Activated CD4-positive, alpha-beta memory T cell treated with anti-CD3 and anti-CD28 coated beads for 36 hours (primary cell): ENCODE measurements at regions of chr15 and their contacts with region 1.

Region 1: DNA sequence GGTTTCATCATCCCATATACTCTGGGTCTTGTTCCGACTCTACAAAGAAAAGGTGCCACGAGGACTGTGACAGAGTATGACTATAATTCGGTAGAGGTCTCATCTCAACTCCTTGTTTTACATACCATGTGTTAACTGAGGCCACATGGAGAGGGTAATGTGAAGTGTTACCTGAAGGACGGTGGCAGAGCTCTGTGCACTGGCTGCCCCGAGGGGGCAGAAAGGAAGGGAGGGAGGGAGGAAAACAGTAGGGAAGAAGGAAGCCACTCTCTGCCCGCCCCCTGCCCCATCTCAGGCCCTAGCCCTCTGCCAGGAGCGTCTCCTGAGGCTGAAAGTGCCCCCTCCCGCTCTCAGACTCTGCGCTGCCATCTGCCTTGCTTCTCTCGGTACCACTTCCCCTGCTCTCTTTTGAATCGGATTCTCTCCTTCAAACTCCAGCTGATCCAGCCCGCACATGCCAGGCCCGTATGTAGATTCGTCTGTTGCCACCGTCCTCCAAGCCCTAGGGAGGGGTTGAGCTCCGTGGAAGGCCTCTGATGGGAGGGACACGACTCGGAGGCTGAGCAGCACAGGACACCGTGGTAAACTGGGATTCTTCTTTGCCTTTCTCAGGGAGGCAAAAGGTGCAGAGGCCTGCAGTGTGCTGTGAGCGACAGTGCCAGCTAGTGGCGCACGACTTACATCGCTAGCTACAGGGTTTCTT is 70.5 kb upstream of the ATP10A start:
- DNase-seq: peak; percentile 83
- H3K4me3 Mint-ChIP-seq: peak overlapping the region; percentile 81
- H3K27ac Mint-ChIP-seq: no peak overlapping the region
- H3K4me1 Mint-ChIP-seq: peaks cover 7% of the 10 kb centered on the region
- H3K27me3 Mint-ChIP-seq: peaks cover 5% of the 10 kb centered on the region

Region 2: GRCh38 chr15:25508369-25509002 is 425.1 kb before region 1 on chr15:
- CTCF ChIA-PET with region 1: interaction called, 30 read pairs
- POLR2A ChIA-PET with region 1: no interaction called
- intact Hi-C with region 1: loop called (anchors 1 kb)
- DNase-seq: no peak
- H3K4me3 Mint-ChIP-seq: no peak overlapping the region
- H3K27ac Mint-ChIP-seq: no peak overlapping the region
- H3K4me1 Mint-ChIP-seq: no peaks in the 10 kb centered on the region
- H3K27me3 Mint-ChIP-seq: peaks cover 5% of the 10 kb centered on the region

Region 3: DNA sequence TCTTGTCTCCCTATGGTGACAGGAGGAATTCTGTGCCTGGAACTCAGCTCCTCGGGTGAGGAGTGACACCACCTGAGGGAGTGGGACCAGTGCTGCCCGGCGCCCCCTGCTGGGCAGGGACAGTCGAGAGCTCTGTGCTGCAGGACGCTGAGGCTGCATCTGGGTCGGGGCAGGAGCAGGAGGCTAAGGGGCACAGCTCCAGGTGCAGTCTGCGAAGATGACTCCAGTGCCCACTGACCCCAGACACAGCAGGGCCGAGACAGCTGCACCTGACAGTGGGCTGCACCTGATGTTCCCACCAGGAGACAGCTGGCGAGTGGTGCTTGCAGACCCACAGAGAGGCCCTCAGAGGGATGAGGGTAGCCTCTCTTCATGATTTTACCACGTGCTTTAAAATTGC is 223.4 kb before region 1 on chr15:
- CTCF ChIA-PET with region 1: interaction called, 12 read pairs
- POLR2A ChIA-PET with region 1: no interaction called
- intact Hi-C with region 1: no loop called
- DNase-seq: peak; percentile 61
- H3K4me3 Mint-ChIP-seq: no peak overlapping the region
- H3K27ac Mint-ChIP-seq: no peak overlapping the region
- H3K4me1 Mint-ChIP-seq: no peaks in the 10 kb centered on the region
- H3K27me3 Mint-ChIP-seq: no peaks in the 10 kb centered on the region

Region 4: GRCh38 chr15:25783607-25784540 is 149.7 kb before region 1 on chr15:
- CTCF ChIA-PET with region 1: interaction called, 27 read pairs
- POLR2A ChIA-PET with region 1: no interaction called
- intact Hi-C with region 1: no loop called
- DNase-seq: peak; percentile 62
- H3K4me3 Mint-ChIP-seq: no peak overlapping the region
- H3K27ac Mint-ChIP-seq: no peak overlapping the region
- H3K4me1 Mint-ChIP-seq: peaks cover 33% of the 10 kb centered on the region
- H3K27me3 Mint-ChIP-seq: no peaks in the 10 kb centered on the region

Region 5: DNA sequence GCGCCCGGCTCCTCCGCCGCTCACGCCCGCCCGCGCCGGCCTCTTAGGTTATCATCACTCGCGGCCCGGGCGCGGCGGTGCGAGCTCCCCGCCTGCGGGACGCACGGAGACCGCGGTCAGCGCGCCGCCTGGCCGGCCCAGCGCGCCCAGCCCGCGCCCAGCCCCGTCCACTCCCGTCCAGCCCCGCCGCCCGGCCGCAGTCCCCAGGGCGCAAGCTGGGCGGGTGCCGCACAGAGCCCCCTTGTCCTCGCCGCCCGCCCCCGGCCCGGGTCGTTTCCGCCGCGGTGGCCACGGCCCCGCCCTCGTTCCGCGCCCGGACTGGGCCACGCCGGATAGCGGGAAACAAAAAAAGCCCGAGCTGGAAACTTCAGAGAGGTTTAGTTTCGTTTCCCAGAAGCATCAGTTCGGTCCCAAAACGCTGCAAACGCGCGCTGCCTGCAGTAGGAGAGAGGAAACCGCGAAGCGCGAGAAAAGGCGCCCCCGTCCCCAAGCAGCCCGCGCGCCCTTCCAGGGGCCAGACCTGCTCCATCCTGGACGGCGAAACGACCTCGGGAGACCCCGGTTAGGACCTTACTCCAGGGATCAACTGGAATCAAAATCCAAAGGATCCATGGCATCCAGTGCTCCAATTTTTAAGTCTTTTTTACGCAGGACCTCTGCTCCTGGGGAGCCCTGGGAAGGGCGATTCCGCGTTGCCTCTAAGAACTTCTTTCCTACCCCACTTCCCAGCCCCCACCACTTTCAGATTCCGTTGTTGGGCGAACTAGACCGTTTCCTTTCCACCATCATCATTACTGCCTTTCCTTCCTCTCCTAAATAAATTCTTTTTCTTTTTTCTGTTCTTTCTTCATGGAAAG is 70.3 kb before region 1 on chr15 and contains the start of gene ATP10A:
- CTCF ChIA-PET with region 1: interaction called, 5 read pairs
- POLR2A ChIA-PET with region 1: no interaction called
- intact Hi-C with region 1: loop called (anchors 10 kb)
- DNase-seq: peak; percentile 66
- H3K4me3 Mint-ChIP-seq: peak within 1 kb of the TSS; percentile 90
- H3K27ac Mint-ChIP-seq: peak within 1 kb of the TSS; percentile 86
- H3K4me1 Mint-ChIP-seq: peaks cover 34% of the 10 kb centered on the region
- H3K27me3 Mint-ChIP-seq: no peaks in the 10 kb centered on the region
- total RNA-seq, gene ATP10A: 15.9 to 17.2 TPM